ENCODE measurements at regions of chrX and their contacts with region 1.

Region 1: GRCh38 chrX:119729408-119730201 is 28.8 kb upstream of the SOWAHD start:
- DNase-seq: peak; percentile 76
- ATAC-seq: peak; percentile 61
- H3K4me3 Mint-ChIP-seq: no peak overlapping the region
- H3K27ac Mint-ChIP-seq: no peak overlapping the region
- H3K4me1 Mint-ChIP-seq: peaks cover 13% of the 10 kb centered on the region
- H3K27me3 Mint-ChIP-seq: no peaks in the 10 kb centered on the region

Region 2: GRCh38 chrX:119206203-119206602 is 523.4 kb before region 1 on chrX:
- CTCF ChIA-PET with region 1: no interaction called
- POLR2A ChIA-PET with region 1: no interaction called
- DNase-seq: no peak
- ATAC-seq: no peak
- H3K4me3 Mint-ChIP-seq: no peak overlapping the region
- H3K27ac Mint-ChIP-seq: no peak overlapping the region
- H3K4me1 Mint-ChIP-seq: no peaks in the 10 kb centered on the region
- H3K27me3 Mint-ChIP-seq: peaks cover 9% of the 10 kb centered on the region

Region 3: DNA sequence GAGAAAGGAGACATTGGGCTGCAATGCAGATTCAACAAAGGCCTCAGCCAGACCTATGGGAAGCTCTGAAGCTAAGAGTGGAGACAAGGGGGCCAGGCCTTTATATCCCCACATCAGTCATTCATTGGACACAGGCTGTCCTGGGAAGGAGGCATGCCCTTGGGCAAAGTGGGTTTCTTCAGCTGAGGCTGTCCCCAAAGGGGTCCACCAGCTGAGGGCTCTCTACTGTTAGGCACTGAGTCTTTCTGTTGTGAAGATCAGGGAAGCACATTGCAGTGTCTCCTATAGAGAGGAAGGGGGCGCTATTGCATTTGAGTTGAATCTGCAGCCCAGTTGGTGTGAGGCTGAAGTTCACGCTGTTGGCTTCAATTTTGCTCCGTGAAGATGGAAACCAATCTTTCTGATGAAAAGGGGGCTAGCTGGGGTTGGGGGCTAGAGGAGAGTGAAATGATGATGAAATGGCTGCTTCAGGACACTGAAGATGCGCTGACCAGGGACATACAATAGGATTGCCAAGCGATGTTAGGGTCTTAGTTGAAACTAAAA is 213.4 kb before region 1 on chrX:
- CTCF ChIA-PET with region 1: interaction called, 21 read pairs
- POLR2A ChIA-PET with region 1: no interaction called
- DNase-seq: peak; percentile 56
- ATAC-seq: peak; percentile 95
- H3K4me3 Mint-ChIP-seq: no peak overlapping the region
- H3K27ac Mint-ChIP-seq: no peak overlapping the region
- H3K4me1 Mint-ChIP-seq: peaks cover 4% of the 10 kb centered on the region
- H3K27me3 Mint-ChIP-seq: no peaks in the 10 kb centered on the region

Region 4: DNA sequence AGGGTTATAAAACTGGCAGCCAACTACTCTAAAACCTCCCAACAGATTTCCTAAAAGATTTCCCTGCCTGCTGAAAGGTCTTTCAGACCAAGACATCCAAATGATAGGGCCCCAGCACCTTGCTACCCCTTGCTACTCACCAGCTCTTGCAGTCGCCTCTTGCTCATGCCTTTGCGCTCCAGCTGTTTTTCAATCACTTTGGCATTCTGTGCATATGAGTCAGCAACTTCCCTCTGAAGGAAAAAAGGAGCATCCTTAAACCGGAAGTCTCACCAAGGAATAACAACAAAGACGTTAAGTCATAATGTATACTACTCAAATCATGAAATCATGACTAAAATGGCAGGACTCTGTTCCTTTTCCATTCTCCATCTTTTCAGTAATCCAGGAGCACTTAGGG is 188.4 kb before region 1 on chrX:
- CTCF ChIA-PET with region 1: no interaction called
- POLR2A ChIA-PET with region 1: no interaction called
- DNase-seq: no peak
- ATAC-seq: no peak
- H3K4me3 Mint-ChIP-seq: no peak overlapping the region
- H3K27ac Mint-ChIP-seq: no peak overlapping the region
- H3K4me1 Mint-ChIP-seq: peaks cover 7% of the 10 kb centered on the region
- H3K27me3 Mint-ChIP-seq: no peaks in the 10 kb centered on the region

Region 5: GRCh38 chrX:119669424-119670037 is 60.1 kb before region 1 on chrX:
- CTCF ChIA-PET with region 1: interaction called, 11 read pairs
- POLR2A ChIA-PET with region 1: no interaction called
- DNase-seq: no peak
- ATAC-seq: no peak
- H3K4me3 Mint-ChIP-seq: no peak overlapping the region
- H3K27ac Mint-ChIP-seq: no peak overlapping the region
- H3K4me1 Mint-ChIP-seq: peaks cover 26% of the 10 kb centered on the region
- H3K27me3 Mint-ChIP-seq: no peaks in the 10 kb centered on the region

Region 6: GRCh38 chrX:119693040-119693995 is 36.3 kb before region 1 on chrX and contains the start of gene SEPTIN6:
- CTCF ChIA-PET with region 1: interaction called, 37 read pairs
- POLR2A ChIA-PET with region 1: interaction called, 15 read pairs
- DNase-seq: peak; percentile 91
- ATAC-seq: peak; percentile 80
- H3K4me3 Mint-ChIP-seq: peak within 1 kb of the TSS; percentile 92
- H3K27ac Mint-ChIP-seq: peak within 1 kb of the TSS; percentile 99
- H3K4me1 Mint-ChIP-seq: peaks cover 16% of the 10 kb centered on the region
- H3K27me3 Mint-ChIP-seq: no peaks in the 10 kb centered on the region
- total RNA-seq, gene SEPTIN6: 303 to 312 TPM

Region 7: DNA sequence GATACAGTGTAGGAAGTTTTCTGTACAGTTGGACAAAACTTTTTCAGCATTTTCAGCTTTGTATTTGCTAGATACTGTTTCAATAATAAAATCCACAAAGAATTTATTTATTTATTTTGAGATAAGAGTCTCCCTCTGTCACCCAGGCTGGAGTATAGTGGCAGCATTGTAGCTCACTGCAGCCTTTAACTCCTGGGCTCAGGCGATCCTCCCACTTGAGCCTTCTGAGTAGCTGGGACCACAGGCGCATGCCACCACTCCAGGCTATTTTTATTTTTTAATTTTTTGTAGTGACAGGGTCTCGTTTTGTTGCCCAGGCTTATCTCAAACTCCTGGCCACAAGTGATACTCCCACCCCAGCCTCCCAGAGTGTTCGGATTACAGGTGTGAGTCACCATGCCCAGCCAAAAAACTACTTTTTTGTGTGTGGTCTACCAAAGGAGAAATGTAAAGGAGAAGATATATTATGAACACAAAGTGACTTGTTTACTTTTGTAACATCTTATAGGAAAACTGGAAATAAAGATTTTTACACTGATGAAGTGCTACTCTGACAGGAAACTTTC is 15.8 kb after region 1 on chrX:
- CTCF ChIA-PET with region 1: interaction called, 11 read pairs
- POLR2A ChIA-PET with region 1: interaction called, 3 read pairs
- DNase-seq: no peak
- ATAC-seq: no peak
- H3K4me3 Mint-ChIP-seq: no peak overlapping the region
- H3K27ac Mint-ChIP-seq: no peak overlapping the region
- H3K4me1 Mint-ChIP-seq: peaks cover 5% of the 10 kb centered on the region
- H3K27me3 Mint-ChIP-seq: no peaks in the 10 kb centered on the region

Region 8: GRCh38 chrX:119852382-119853353 is 123.1 kb after region 1 on chrX and contains the start of gene UPF3B:
- CTCF ChIA-PET with region 1: no interaction called
- POLR2A ChIA-PET with region 1: no interaction called
- DNase-seq: peak; percentile 96
- ATAC-seq: peak; percentile 98
- H3K4me3 Mint-ChIP-seq: peak within 1 kb of the TSS; percentile 88
- H3K27ac Mint-ChIP-seq: peak within 1 kb of the TSS; percentile 88
- H3K4me1 Mint-ChIP-seq: peaks cover 13% of the 10 kb centered on the region
- H3K27me3 Mint-ChIP-seq: peaks cover under 1% of the 10 kb centered on the region
- total RNA-seq, gene UPF3B: 10.3 to 10.9 TPM

Region 9: GRCh38 chrX:120294651-120295050 is 565.0 kb after region 1 on chrX:
- CTCF ChIA-PET with region 1: no interaction called
- POLR2A ChIA-PET with region 1: no interaction called
- DNase-seq: no peak
- ATAC-seq: no peak
- H3K4me3 Mint-ChIP-seq: no peak overlapping the region
- H3K27ac Mint-ChIP-seq: no peak overlapping the region
- H3K4me1 Mint-ChIP-seq: peaks cover 7% of the 10 kb centered on the region
- H3K27me3 Mint-ChIP-seq: no peaks in the 10 kb centered on the region

Measured in activated CD8-positive, alpha-beta T cell treated with anti-CD3 and anti-CD28 coated beads, Interleukin-2, amount 10 ng/mL, durations not matched to agents 7 days and 5 days (primary cell).